Stomach (tissue), 19 donors: ENCODE measurements at regions of chr1 and their contacts with region 1.

Region 1: DNA sequence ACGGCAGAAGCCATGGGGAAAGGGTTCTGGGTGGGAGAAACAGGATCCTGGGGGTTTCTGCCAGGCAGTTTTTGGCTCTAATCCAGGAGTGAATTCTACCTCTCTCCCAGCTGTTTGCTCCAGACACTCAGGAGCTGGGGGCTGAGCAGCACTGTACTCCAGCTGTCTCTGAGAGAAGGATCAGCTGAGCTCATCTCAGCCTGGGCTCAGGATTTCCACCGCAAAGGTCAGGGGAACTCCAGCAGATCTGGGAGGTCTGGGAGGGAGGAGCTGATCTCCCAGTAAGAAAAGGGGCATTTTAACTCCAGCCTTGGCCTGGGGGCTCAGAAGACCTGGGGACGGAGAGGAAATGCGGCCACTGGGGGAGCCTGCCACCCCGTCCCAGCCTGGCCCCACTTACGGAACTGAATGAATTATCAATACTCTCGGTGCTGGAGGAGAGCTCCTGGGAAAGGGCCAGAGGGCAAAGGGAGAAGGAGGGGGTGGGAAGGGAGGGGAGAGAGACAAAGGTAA is 17.3 kb downstream of the PI4KB start:
- DNase-seq: peak in 1 of 2 donors; percentile 64
- H3K4me3 ChIP-seq: no peak overlapping the region
- H3K27ac ChIP-seq: peak overlapping the region; percentile 62 to 84 (median 84)
- H3K4me1 ChIP-seq: peaks cover 42 to 63% (median 58%) of the 10 kb centered on the region in 4 donors
- H3K27me3 ChIP-seq: no peaks in the 10 kb centered on the region
- CTCF ChIP-seq: no peak
- EP300 ChIP-seq: no peak
- POLR2A ChIP-seq: no peak

Region 2: DNA sequence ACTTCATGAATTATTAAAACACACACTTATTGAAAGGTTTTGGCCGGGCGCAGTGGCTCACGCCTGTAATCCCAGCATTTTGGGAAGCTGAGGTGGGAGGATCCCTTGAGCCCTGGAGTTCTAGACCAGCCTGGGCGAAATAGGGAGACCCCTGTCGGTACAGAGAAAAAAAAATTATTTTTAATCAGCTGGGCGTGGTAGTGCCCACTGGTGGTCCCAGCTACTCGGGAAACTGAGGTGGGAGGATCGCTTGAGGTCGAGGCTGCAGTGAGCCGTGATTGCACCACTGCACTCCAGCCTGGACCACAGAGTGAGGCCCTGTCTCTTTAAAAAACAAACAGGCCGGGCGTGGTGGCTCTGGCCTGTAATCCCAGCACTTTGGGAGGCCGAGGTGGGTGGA is 237.6 kb before region 1 on chr1:
- intact Hi-C with region 1: no loop called
- DNase-seq: no peak
- H3K4me3 ChIP-seq: no peak overlapping the region
- H3K27ac ChIP-seq: peak overlapping the region in 4 of 5 donors; percentile 98 to 99 (median 99)
- H3K4me1 ChIP-seq: peaks cover 12 to 29% (median 20%) of the 10 kb centered on the region in 4 donors
- H3K27me3 ChIP-seq: no peaks in the 10 kb centered on the region
- CTCF ChIP-seq: no peak
- EP300 ChIP-seq: no peak
- POLR2A ChIP-seq: no peak

Region 3: GRCh38 chr1:151399890-151400495 is 90.1 kb after region 1 on chr1:
- intact Hi-C with region 1: loop called (anchors 10 kb)
- DNase-seq: peak in 1 of 2 donors; percentile 50
- H3K4me3 ChIP-seq: peak overlapping the region; percentile 85 to 95 (median 90)
- H3K27ac ChIP-seq: peak overlapping the region; percentile 84 to 95 (median 94)
- H3K4me1 ChIP-seq: peaks cover 14 to 25% (median 17%) of the 10 kb centered on the region in 4 donors
- H3K27me3 ChIP-seq: no peaks in the 10 kb centered on the region
- CTCF ChIP-seq: no peak
- EP300 ChIP-seq: no peak
- POLR2A ChIP-seq: no peak